Activated B cell treated with CpG ODN at 0.5 μM for 24 hours (primary cell): ENCODE measurements at regions of chr12 and their contacts with region 1.

Region 1: GRCh38 chr12:54560374-54560858 is 11.0 kb downstream of the PDE1B start:
- DNase-seq: peak; percentile 65
- ATAC-seq: peak; percentile 100
- H3K4me3 Mint-ChIP-seq: peak overlapping the region; percentile 88
- H3K27ac Mint-ChIP-seq: peak overlapping the region; percentile 81
- H3K4me1 Mint-ChIP-seq: peaks cover 25% of the 10 kb centered on the region
- H3K27me3 Mint-ChIP-seq: no peaks in the 10 kb centered on the region
- CTCF ChIP-seq: no peak

Region 2: DNA sequence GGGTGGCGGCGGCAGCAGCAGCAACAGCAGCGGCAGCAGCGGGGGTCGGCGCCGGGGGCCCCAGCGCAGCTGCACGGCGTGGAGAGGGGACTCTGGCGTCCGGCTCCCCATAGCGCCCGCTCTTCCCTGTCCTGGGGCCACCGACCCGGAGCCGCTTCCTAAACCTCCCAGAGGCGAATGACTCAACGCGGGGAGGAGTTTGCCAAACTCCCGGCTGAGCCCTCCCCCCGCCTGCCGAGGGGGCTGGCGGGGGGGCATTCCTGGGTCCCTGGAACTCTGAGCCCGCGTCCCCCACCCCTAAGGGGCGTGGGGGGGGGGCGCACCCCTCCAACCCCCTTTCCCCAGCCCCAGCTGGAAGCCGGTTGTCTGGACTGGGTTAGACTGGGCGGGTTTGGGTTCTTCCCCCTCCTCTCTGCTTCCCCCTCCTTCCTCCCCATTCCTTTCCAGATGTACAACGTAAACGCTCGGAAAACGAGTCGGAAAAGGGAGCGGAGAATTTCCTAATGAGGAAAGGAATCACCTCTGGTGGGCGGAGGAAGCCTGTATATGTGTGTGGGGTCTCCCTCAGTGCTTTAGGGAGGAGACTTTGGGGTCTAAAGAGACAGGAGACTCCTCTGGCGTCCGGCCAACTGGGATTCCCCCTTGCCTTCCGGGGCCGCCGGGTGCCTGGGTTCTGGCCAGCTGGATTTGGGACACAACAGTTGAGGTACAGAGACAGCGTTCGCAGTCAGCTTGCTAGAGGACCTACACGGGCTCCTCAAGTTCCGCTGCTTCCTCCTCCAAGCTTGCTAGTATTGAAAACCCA is 141.1 kb before region 1 on chr12 and contains the start of gene ITGA5:
- CTCF ChIA-PET with region 1: no interaction called
- POLR2A ChIA-PET with region 1: no interaction called
- intact Hi-C with region 1: loop called (anchors 10 kb)
- DNase-seq: no peak
- ATAC-seq: peak; percentile 56
- H3K4me3 Mint-ChIP-seq: peak within 1 kb of the TSS; percentile 83
- H3K27ac Mint-ChIP-seq: peak within 1 kb of the TSS; percentile 50
- H3K4me1 Mint-ChIP-seq: peaks cover 53% of the 10 kb centered on the region
- H3K27me3 Mint-ChIP-seq: peaks cover 20% of the 10 kb centered on the region
- CTCF ChIP-seq: no peak
- total RNA-seq, gene ITGA5: 1.0 and 1.3 TPM in 2 replicates

Region 3: GRCh38 chr12:54439521-54440255 is 120.7 kb before region 1 on chr12:
- CTCF ChIA-PET with region 1: no interaction called
- POLR2A ChIA-PET with region 1: no interaction called
- intact Hi-C with region 1: no loop called
- DNase-seq: no peak
- ATAC-seq: peak; percentile 79
- H3K4me3 Mint-ChIP-seq: no peak overlapping the region
- H3K27ac Mint-ChIP-seq: no peak overlapping the region
- H3K4me1 Mint-ChIP-seq: peaks cover 7% of the 10 kb centered on the region
- H3K27me3 Mint-ChIP-seq: peaks cover 4% of the 10 kb centered on the region
- CTCF ChIP-seq: peak; percentile 22

Region 4: DNA sequence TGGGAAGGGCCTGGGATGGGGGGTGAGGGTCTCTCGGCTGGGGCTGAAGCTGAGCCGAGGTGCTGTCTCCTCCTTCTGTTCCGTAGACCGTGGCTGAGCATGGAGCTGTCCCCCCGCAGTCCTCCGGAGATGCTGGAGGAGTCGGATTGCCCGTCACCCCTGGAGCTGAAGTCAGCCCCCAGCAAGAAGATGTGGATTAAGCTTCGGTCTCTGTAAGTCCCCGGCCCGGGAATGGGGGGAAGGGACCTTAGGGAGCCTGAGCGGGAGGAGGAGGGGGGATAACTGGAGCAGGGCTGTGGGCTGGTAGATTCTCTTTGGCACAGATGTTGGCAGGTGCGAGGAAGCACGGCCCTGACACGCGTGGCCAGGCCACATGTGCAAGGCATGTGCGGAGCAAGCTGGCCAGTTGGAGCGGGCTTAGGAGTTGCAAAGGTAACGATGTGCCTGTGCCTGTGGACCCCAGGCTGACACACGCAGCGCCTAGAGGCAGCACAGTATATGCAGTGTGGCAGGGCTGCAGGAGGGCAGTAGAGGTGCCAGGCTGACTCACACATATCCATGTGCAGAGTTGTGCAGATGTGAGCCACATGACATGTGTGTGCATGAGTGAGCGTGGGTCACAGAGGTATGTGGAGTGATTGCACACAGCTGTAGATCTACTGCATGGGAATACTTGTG is 10.5 kb before region 1 on chr12:
- CTCF ChIA-PET with region 1: no interaction called
- POLR2A ChIA-PET with region 1: interaction called, 13 read pairs
- intact Hi-C with region 1: no loop called
- DNase-seq: peak; percentile 21
- ATAC-seq: peak; percentile 70
- H3K4me3 Mint-ChIP-seq: peak overlapping the region; percentile 85
- H3K27ac Mint-ChIP-seq: peak overlapping the region; percentile 38
- H3K4me1 Mint-ChIP-seq: peaks cover 21% of the 10 kb centered on the region
- H3K27me3 Mint-ChIP-seq: no peaks in the 10 kb centered on the region
- CTCF ChIP-seq: no peak

Region 5: DNA sequence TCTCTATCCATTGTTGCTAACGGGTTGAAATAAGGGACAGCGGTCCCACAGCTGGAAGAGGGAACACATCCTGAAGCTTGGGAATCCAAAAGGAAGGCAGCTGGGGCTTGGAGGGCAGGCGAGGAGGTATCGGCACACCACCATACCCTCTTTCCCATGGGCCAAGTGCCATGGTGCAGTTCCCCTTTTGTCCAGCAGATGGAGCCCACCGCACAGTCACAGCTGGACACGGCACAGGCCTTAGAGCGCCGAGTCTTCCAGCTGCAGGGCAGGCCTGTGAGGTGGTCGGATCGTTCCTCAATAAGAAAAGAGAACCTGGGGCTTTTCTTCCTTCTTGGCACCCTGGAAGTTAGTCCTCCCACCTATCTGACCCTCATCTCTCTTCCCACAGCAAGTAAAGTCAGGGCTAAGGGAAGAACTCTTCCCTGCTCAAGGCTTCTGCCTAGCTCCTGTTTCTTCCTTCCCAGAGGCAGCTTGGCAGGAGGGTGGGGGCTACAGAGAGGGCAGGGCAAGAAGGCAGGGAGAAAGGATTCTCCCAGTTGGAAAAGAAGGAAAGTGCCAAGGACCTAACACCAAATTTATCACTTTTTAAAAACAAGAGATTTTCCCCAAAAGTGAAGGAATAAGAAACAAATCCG is 19.4 kb after region 1 on chr12:
- CTCF ChIA-PET with region 1: interaction called, 10 read pairs
- POLR2A ChIA-PET with region 1: no interaction called
- intact Hi-C with region 1: no loop called
- DNase-seq: peak; percentile 79
- ATAC-seq: peak; percentile 99
- H3K4me3 Mint-ChIP-seq: no peak overlapping the region
- H3K27ac Mint-ChIP-seq: no peak overlapping the region
- H3K4me1 Mint-ChIP-seq: peaks cover 6% of the 10 kb centered on the region
- H3K27me3 Mint-ChIP-seq: peaks cover 14% of the 10 kb centered on the region
- CTCF ChIP-seq: peak; percentile 80

Region 6: DNA sequence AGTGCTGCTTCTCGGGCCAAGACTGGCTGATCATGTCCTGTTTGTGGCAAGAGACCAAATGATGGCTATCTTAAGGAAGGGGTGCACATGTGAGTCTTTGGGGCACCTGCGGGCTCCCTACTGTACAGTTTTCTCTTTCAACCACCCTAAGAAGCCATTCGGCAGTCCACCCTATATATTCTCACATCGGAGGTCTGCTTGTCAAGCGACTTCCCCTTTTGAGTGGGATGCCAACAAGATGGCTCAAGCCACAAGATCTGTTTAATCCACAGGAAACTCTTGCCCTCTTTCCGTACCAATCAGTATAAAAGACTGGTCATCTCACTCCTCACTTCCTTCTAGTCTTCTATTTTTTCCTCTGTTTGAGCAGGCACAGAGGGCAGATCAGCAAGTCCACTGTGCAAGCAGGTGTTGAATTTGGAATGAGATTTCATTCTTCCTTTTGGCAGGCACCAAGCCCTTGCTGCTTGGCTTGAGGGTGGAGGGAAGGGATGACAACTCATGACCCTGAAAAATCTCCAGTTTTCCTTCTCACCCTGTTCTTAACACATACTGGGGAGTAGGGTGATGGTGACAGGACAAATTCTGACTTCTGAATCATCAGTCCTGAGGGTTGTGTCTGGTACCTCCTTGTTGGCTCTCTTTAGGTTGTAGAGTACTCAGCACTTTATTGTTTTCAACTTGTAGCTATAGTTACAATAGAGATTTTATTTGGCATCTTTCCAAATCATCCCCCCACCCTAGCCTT is 56.7 kb after region 1 on chr12:
- CTCF ChIA-PET with region 1: no interaction called
- POLR2A ChIA-PET with region 1: no interaction called
- intact Hi-C with region 1: no loop called
- DNase-seq: no peak
- ATAC-seq: no peak
- H3K4me3 Mint-ChIP-seq: no peak overlapping the region
- H3K27ac Mint-ChIP-seq: no peak overlapping the region
- H3K4me1 Mint-ChIP-seq: peaks cover 4% of the 10 kb centered on the region
- H3K27me3 Mint-ChIP-seq: peaks cover 39% of the 10 kb centered on the region
- CTCF ChIP-seq: no peak